Endothelial cell of umbilical vein (primary cell): ENCODE measurements at regions of chr17 and their contacts with region 1.

Region 1: DNA sequence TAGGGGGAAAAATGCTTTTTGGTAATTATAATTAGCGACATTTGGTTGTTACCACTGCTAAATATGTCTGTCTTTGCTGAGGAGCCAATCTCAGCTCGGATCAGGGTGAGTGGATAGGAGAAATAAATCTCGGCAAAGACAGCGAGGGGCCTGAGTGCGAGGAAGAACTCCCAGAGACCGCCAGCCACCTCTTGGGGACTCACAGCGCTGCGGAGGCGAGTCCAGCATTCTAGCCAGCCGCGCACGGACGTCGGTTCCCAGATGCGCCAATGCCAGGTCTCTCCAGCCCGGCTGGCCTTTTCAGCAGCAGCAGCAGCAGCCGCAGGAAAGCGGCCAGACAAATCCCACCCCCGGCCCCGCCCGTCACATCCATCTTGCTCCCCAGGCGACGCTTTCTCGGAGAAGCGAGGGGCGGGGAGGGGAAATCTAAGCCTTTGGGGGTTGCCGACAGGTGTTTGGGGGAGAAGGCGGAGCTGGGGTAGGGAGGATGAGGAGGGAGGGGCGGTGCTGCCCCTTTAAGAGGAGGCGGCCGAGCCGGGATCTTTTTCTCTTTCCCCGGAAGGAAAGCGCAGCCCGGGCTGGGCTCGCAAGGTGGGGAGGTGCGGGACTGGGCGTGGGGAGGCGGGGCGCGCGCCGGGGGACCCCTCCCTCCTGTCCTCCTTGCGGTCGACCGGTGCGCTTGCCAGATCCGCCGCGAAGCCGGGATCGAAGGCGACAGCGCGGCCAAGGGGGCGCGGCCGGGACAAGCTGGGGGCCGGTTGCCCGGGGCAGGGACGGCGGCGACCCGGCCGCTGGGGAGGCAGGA is at the start of gene ITGA3:
- DNase-seq: peak; percentile 80
- H3K4me3 ChIP-seq: peak within 1 kb of the TSS; percentile 65 to 77 (median 77)
- H3K27ac ChIP-seq: peak within 1 kb of the TSS; percentile 39
- H3K4me1 ChIP-seq: peaks cover 65% of the 10 kb centered on the region
- H3K27me3 ChIP-seq: no peaks in the 10 kb centered on the region
- CTCF ChIP-seq: no peak
- POLR2A ChIP-seq: peak; percentile 57
- total RNA-seq, gene ITGA3: 93.8 and 112 TPM in 2 replicates

Region 2: DNA sequence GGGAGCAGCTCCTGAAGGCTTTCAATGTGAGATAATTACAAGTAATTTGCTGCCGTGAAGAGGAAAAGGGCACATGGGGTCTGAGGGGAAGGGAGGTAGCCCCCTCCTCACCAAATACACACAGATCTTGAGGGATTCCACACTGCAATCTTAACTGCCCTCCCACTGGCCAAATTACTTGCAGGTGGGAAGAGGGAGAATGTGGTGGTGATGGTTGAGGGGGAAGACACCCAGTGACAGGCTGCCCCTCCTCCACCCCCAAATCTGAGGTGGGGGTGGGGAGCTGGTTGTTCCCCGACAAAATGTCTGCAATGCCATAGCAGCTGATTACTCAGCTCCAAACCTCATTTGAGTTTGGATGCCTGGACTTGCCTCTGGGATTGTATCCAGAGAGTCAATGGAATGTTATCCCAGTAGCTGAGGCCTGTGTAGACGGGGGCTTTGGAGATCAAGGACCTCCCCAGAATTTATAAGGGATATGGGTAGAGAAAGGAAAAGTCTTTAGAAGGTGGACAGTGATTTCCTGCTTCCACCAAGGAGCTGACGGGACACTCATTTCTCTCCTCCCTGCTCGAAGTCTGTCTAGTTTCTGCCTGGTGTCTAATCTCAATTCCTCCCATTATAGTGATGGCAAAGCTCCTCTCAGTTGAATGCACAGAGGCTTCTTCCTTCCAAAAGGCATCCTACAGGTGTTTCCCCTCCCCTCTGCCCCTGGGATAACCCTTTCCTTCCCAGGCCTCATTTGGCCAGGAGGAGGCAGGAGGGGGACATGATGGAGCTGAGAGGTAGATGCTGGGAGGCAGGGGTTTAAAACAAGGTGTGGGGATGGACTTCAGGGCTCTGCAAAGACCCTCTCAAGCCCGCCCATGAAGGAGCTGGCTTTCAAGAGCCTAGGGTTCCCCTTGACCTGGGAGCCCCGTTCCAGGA is 77.9 kb before region 1 on chr17:
- CTCF ChIA-PET with region 1: no interaction called
- POLR2A ChIA-PET with region 1: no interaction called
- dilution Hi-C with region 1: no loop called
- intact Hi-C with region 1: no loop called
- DNase-seq: no peak
- H3K4me3 ChIP-seq: no peak overlapping the region
- H3K27ac ChIP-seq: no peak overlapping the region
- H3K4me1 ChIP-seq: no peaks in the 10 kb centered on the region
- H3K27me3 ChIP-seq: peaks cover 51 to 66% of the 10 kb centered on the region in 2 experiments
- CTCF ChIP-seq: no peak
- POLR2A ChIP-seq: no peak

Region 3: GRCh38 chr17:49987681-49988441 is 67.8 kb before region 1 on chr17:
- CTCF ChIA-PET with region 1: no interaction called
- POLR2A ChIA-PET with region 1: no interaction called
- dilution Hi-C with region 1: no loop called
- intact Hi-C with region 1: no loop called
- DNase-seq: no peak
- H3K4me3 ChIP-seq: no peak overlapping the region
- H3K27ac ChIP-seq: no peak overlapping the region
- H3K4me1 ChIP-seq: no peaks in the 10 kb centered on the region
- H3K27me3 ChIP-seq: peaks cover 30 to 46% of the 10 kb centered on the region in 2 experiments
- CTCF ChIP-seq: no peak
- POLR2A ChIP-seq: no peak

Region 4: DNA sequence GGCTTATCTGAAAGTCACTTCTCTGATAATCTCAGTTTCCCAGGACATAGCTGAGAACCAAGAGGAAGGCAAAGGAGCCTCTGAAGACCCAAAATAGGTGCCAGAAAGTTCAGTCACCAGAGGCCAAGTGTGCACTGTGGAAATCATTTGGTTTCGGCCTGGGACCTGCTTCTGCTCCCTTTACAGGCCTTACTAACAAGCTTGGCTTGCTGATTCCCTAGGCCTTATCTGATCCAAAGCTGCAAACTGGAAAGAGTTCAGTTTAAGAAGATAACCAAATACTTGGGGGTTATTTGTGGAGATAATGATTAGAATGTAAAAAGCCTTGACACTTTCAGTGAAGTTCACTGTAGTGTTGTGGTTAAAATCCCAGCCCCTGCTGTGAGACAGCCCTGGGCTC is 17.3 kb after region 1 on chr17:
- CTCF ChIA-PET with region 1: interaction called, 10 read pairs
- POLR2A ChIA-PET with region 1: no interaction called
- dilution Hi-C with region 1: no loop called
- intact Hi-C with region 1: no loop called
- DNase-seq: no peak
- H3K4me3 ChIP-seq: no peak overlapping the region
- H3K27ac ChIP-seq: no peak overlapping the region
- H3K4me1 ChIP-seq: no peaks in the 10 kb centered on the region
- H3K27me3 ChIP-seq: no peaks in the 10 kb centered on the region
- CTCF ChIP-seq: no peak
- POLR2A ChIP-seq: no peak

Region 5: DNA sequence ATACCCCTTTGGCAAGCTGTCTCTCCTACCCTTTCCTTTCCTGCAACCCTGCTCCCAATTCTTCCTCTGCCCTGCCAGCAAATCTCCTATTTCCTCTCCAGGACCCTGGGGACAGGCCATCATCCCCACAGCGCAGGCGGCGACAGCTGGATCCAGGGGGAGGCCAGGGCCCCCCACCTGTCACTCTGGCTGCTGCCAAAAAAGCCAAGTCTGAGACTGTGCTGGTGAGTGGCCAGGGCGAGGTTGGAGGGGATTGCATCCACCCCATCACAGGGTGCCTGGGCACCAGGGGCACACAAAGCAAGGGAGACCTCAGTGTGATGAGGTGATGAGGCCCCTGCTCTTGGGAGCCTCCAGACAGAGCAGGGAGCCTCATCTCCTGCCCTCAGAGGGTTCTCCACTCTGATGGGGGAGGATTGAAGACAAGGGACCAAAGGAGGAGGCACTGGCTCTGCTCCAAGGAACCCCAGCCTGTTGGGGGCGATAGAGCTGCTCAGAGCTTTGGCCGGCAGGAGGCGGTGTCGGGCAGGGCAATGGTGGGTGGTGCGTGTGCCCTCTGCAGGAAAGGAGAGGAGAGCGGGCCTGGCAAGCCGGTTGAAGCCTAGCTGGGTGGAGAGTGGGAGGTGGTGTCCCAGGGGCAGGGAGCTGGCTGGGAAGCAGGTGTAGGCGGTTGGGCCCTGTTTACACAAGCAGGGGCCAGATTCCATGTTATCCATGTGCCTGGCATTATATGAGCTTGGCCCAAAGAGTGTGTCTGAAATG is 23.9 kb after region 1 on chr17:
- CTCF ChIA-PET with region 1: interaction called, 13 read pairs
- POLR2A ChIA-PET with region 1: interaction called, 3 read pairs
- dilution Hi-C with region 1: no loop called
- intact Hi-C with region 1: no loop called
- DNase-seq: peak; percentile 17
- H3K4me3 ChIP-seq: no peak overlapping the region
- H3K27ac ChIP-seq: no peak overlapping the region
- H3K4me1 ChIP-seq: no peaks in the 10 kb centered on the region
- H3K27me3 ChIP-seq: no peaks in the 10 kb centered on the region
- CTCF ChIP-seq: peak; percentile 64 to 71
- POLR2A ChIP-seq: no peak

Region 6: DNA sequence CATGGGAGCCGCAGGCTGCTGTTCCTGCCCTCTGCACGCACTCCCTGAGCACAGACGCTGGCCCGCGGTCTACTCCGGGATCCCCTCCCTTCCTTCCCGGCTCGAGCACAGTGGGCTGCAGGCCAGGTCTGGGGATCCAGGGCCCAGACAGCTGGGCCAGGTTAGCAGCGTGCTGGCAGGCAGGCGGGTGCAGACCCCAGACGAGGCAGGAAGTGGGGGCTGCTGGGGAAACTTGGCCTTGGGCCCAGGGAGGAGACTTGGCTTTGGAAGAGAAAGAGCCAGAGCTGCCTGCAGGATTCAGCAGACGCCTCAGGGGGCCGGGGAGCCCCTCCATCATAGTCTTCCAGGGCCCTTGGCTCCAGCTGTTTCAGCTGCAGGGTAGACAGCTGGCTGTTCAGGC is 548.9 kb after region 1 on chr17:
- CTCF ChIA-PET with region 1: no interaction called
- POLR2A ChIA-PET with region 1: no interaction called
- dilution Hi-C with region 1: no loop called
- intact Hi-C with region 1: no loop called
- DNase-seq: peak; percentile 88
- H3K4me3 ChIP-seq: no peak overlapping the region
- H3K27ac ChIP-seq: no peak overlapping the region
- H3K4me1 ChIP-seq: peaks cover 13% of the 10 kb centered on the region
- H3K27me3 ChIP-seq: peaks cover 2 to 3% of the 10 kb centered on the region in 2 experiments
- CTCF ChIP-seq: no peak
- POLR2A ChIP-seq: no peak